Ovary (tissue), 10 donors: ENCODE measurements at regions of chr7 and their contacts with region 1.

Region 1: DNA sequence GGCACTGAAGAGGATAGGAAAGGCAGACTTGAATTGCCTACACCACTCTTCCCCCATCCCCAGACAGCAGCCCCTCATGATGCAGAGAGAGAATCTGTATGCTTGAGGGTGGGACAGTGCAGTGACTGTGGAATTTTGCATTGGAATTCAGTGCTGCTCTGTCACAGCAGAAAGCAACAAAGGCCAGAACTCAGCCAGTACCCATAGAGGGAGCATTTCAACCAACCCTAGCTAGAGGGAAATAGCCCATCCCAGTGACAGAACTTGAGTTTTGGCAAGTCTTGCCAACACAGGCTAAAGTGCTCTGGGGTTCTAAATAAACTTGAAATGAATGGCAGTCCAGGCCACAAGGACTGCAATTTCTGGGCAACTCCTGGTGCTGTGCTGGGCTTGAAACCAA is 80.4 kb downstream of the TES start:
- DNase-seq: no peak
- H3K4me3 ChIP-seq: no peak overlapping the region
- H3K27ac ChIP-seq: no peak overlapping the region
- H3K4me1 ChIP-seq: no peaks in the 10 kb centered on the region
- H3K27me3 ChIP-seq: no peaks in the 10 kb centered on the region
- CTCF ChIP-seq: no peak
- EP300 ChIP-seq: no peak
- POLR2A ChIP-seq: no peak

Region 2: DNA sequence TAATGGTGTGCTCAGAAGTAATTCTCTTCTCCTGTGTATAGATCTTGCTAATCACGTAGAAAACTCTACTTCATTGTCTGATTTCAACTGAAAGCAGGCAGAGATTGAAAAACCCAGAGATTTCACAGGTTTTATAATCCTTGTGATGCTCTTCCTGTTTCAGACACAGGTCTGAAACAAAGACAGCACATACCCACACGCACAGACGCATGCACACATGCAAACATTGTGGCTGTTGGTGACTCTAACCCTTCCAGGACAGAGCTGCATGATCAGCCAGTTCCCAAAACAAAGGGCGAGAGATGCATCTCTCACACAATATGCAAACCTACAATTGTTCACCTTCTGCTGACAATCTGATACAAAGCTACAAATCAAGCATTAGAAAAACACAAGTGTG is 249.1 kb before region 1 on chr7:
- intact Hi-C with region 1: no loop called
- DNase-seq: no peak
- H3K4me3 ChIP-seq: no peak overlapping the region
- H3K27ac ChIP-seq: no peak overlapping the region
- H3K4me1 ChIP-seq: no peaks in the 10 kb centered on the region
- H3K27me3 ChIP-seq: no peaks in the 10 kb centered on the region
- CTCF ChIP-seq: no peak
- EP300 ChIP-seq: no peak
- POLR2A ChIP-seq: no peak

Region 3: GRCh38 chr7:116305485-116306408 is 15.0 kb after region 1 on chr7:
- intact Hi-C with region 1: loop called in 1 of 4 experiments (anchors 2 kb)
- DNase-seq: no peak
- H3K4me3 ChIP-seq: no peak overlapping the region
- H3K27ac ChIP-seq: no peak overlapping the region
- H3K4me1 ChIP-seq: peaks cover 2% of the 10 kb centered on the region
- H3K27me3 ChIP-seq: no peaks in the 10 kb centered on the region
- CTCF ChIP-seq: no peak
- EP300 ChIP-seq: no peak
- POLR2A ChIP-seq: no peak

Region 4: DNA sequence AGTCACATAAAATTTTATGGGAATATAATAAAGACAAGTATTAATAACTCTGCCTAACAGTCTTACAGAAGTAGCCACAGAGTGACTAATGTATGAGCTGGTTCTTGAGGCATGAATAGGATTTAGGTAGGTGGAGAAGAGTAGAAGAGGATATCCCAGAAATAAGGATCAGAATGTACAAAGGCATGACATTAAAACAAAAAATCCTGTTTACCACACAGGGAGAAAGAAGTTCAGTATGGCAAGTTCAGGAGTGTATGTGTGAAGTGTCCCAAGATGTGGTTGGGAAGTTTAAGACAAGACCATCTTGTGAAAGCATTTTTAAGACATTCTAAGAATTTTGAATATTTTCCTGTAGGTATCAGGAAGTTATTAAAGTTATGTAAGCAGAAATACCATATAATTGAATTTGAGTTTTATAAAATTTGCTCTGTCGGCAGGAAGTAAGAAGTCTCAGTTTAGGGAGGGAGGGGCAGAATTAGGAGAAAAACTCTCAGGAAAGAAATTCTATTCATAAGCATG is 144.1 kb after region 1 on chr7:
- intact Hi-C with region 1: no loop called
- DNase-seq: no peak
- H3K4me3 ChIP-seq: no peak overlapping the region
- H3K27ac ChIP-seq: no peak overlapping the region
- H3K4me1 ChIP-seq: no peaks in the 10 kb centered on the region
- H3K27me3 ChIP-seq: no peaks in the 10 kb centered on the region
- CTCF ChIP-seq: no peak
- EP300 ChIP-seq: no peak
- POLR2A ChIP-seq: no peak